ENCODE measurements at regions of chr3 and their contacts with region 1.

Region 1: DNA sequence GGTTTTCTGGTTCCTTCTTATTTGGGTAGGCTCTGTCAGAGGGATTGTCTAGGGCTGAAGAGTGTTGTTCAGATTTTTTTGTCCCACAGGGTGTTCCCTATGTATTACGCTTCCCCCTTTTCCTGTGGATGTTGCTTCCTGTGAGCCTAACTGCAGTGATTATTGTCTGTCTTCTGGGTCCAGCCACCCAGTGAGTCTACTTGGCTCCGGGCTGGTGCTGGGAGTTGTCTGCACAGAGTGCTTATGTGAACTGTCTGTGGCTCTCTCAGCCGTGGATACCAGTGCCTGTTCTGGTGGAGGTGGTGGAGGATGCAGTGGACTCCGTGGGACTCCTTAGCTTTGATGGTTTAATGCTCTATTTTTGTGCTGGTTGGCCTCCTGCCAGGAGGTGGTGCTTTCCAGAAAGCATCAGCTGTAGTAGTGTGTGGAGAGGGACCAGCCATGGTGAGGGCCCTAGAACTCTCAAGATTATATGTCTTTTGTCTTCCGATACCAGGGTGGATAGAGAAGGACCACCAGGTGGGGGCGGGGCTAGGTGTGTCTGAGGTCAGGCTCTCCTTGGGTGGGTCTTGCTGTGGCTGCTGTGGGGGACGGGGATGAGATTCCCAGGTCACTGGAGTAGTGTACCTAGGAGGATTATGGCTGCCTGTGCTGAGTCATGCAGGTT is 53.8 kb downstream of the CCDC66 start:
- DNase-seq: peak in 1 of 14 experiments; percentile 13
- ATAC-seq: no peak
- H3K4me3 ChIP-seq: no peak overlapping the region
- H3K4me3 Mint-ChIP-seq: peak overlapping the region; percentile 18
- H3K27ac ChIP-seq: no peak overlapping the region
- H3K27ac Mint-ChIP-seq: peak overlapping the region; percentile 63
- H3K4me1 ChIP-seq: peaks cover 31% of the 10 kb centered on the region
- H3K4me1 Mint-ChIP-seq: peaks cover 73% of the 10 kb centered on the region
- H3K27me3 ChIP-seq: no peaks in the 10 kb centered on the region
- H3K27me3 Mint-ChIP-seq: no peaks in the 10 kb centered on the region
- CTCF ChIP-seq: no peak

Region 2: GRCh38 chr3:56593455-56594158 is 17.2 kb before region 1 on chr3:
- CTCF ChIA-PET with region 1: no interaction called
- POLR2A ChIA-PET with region 1: interaction called, 40 read pairs
- intact Hi-C with region 1: no loop called
- DNase-seq: peak; percentile 38 to 90 (median 51)
- ATAC-seq: peak; percentile 99
- H3K4me3 ChIP-seq: peak overlapping the region; percentile 30
- H3K4me3 Mint-ChIP-seq: peak overlapping the region; percentile 75
- H3K27ac ChIP-seq: peak overlapping the region; percentile 39 to 60
- H3K27ac Mint-ChIP-seq: peak overlapping the region; percentile 95
- H3K4me1 ChIP-seq: peaks cover 26% of the 10 kb centered on the region
- H3K4me1 Mint-ChIP-seq: peaks cover 82% of the 10 kb centered on the region
- H3K27me3 ChIP-seq: no peaks in the 10 kb centered on the region
- H3K27me3 Mint-ChIP-seq: no peaks in the 10 kb centered on the region
- CTCF ChIP-seq: no peak